Activated naive CD4-positive, alpha-beta T cell treated with anti-CD3 and anti-CD28 coated beads for 36 hours (primary cell): ENCODE measurements at regions of chr1 and their contacts with region 1.

Region 1: GRCh38 chr1:235917267-235917811 is 50.6 kb upstream of the LYST start:
- DNase-seq: peak; percentile 88
- H3K4me3 Mint-ChIP-seq: no peak overlapping the region
- H3K27ac Mint-ChIP-seq: peak overlapping the region; percentile 82
- H3K4me1 Mint-ChIP-seq: peaks cover 29% of the 10 kb centered on the region
- H3K27me3 Mint-ChIP-seq: no peaks in the 10 kb centered on the region

Region 2: DNA sequence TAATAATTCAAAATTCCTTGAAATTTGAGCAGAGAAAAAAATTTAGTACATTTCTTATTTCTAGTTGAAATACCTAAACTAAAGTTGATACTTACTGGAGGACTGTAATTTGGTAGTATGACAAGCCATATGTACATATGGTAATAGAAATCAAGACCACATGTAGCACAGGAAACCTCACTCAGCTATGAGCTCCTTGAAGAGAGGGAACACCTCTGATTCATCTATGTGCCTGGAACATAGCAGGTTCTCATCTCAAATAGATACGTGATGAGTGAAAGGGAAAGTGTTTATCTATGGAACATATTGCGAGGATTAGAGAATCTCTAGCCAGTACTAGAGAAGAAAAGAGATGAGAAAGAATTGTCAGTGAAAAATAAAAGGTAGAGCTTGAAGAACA is 219.8 kb before region 1 on chr1:
- CTCF ChIA-PET with region 1: no interaction called
- intact Hi-C with region 1: loop called (anchors 1 kb)
- DNase-seq: peak; percentile 37
- H3K4me3 Mint-ChIP-seq: no peak overlapping the region
- H3K27ac Mint-ChIP-seq: peak overlapping the region; percentile 82
- H3K4me1 Mint-ChIP-seq: peaks cover 18% of the 10 kb centered on the region
- H3K27me3 Mint-ChIP-seq: no peaks in the 10 kb centered on the region

Region 3: DNA sequence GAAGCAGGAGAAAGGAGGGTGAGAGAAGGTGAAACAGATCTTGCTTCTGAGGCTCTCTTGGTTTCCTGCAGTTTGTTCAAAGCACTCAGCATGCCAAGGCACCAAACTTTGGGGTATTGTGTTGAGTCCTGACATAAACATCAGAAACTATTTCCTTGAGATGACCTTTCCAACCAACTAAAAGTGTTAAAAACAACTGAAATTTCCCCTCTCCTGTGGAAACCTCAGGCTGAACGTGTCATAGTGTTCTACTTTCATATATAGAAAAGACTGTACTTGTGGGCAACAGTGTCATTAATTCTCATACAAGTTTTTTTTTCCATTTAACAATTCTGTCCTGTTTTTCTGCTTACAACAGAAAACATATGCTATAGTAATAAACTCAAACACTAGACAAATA is 44.3 kb before region 1 on chr1:
- CTCF ChIA-PET with region 1: interaction called, 3 read pairs
- intact Hi-C with region 1: loop called (anchors 1 kb)
- DNase-seq: peak; percentile 62
- H3K4me3 Mint-ChIP-seq: peak overlapping the region; percentile 49
- H3K27ac Mint-ChIP-seq: peak overlapping the region; percentile 93
- H3K4me1 Mint-ChIP-seq: peaks cover 68% of the 10 kb centered on the region
- H3K27me3 Mint-ChIP-seq: no peaks in the 10 kb centered on the region

Region 4: GRCh38 chr1:235888119-235888643 is 29.2 kb before region 1 on chr1:
- CTCF ChIA-PET with region 1: interaction called, 3 read pairs
- intact Hi-C with region 1: loop called (anchors 1 kb)
- DNase-seq: peak; percentile 61
- H3K4me3 Mint-ChIP-seq: peak overlapping the region; percentile 16
- H3K27ac Mint-ChIP-seq: peak overlapping the region; percentile 82
- H3K4me1 Mint-ChIP-seq: peaks cover 41% of the 10 kb centered on the region
- H3K27me3 Mint-ChIP-seq: no peaks in the 10 kb centered on the region

Region 5: GRCh38 chr1:235952950-235953615 is 35.7 kb after region 1 on chr1:
- CTCF ChIA-PET with region 1: interaction called, 5 read pairs
- intact Hi-C with region 1: loop called (anchors 1 kb)
- DNase-seq: peak; percentile 60
- H3K4me3 Mint-ChIP-seq: no peak overlapping the region
- H3K27ac Mint-ChIP-seq: no peak overlapping the region
- H3K4me1 Mint-ChIP-seq: peaks cover 38% of the 10 kb centered on the region
- H3K27me3 Mint-ChIP-seq: no peaks in the 10 kb centered on the region

Region 6: GRCh38 chr1:236064674-236065508 is 147.6 kb after region 1 on chr1 and contains the start of gene NID1:
- CTCF ChIA-PET with region 1: no interaction called
- intact Hi-C with region 1: loop called (anchors 10 kb)
- DNase-seq: peak; percentile 25
- H3K4me3 Mint-ChIP-seq: peak within 1 kb of the TSS; percentile 63
- H3K27ac Mint-ChIP-seq: no peak within 1 kb of the TSS
- H3K4me1 Mint-ChIP-seq: peaks cover 26% of the 10 kb centered on the region
- H3K27me3 Mint-ChIP-seq: peaks cover 38% of the 10 kb centered on the region
- total RNA-seq, gene NID1: 0.10 TPM in 1 of 2 experiments, not detected in the other